ENCODE measurements at regions of chr17 and their contacts with region 1.

Region 1: GRCh38 chr17:44781553-44782495 is 23.0 kb downstream of the ADAM11 start:
- DNase-seq: no peak
- H3K4me3 ChIP-seq: no peak overlapping the region
- H3K27ac ChIP-seq: no peak overlapping the region
- H3K4me1 ChIP-seq: peaks cover 7% of the 10 kb centered on the region
- H3K27me3 ChIP-seq: no peaks in the 10 kb centered on the region
- CTCF ChIP-seq: no peak

Region 2: GRCh38 chr17:44820631-44821212 is 38.9 kb after region 1 on chr17:
- CTCF ChIA-PET with region 1: no interaction called
- dilution Hi-C with region 1: no loop called
- in situ Hi-C with region 1: no loop called
- intact Hi-C with region 1: loop called (anchors 2 kb)
- DNase-seq: peak; percentile 88
- H3K4me3 ChIP-seq: peak overlapping the region; percentile 10 to 26 (median 13)
- H3K27ac ChIP-seq: peak overlapping the region; percentile 74
- H3K4me1 ChIP-seq: peaks cover 20% of the 10 kb centered on the region
- H3K27me3 ChIP-seq: no peaks in the 10 kb centered on the region
- CTCF ChIP-seq: no peak